Mammary epithelial cell (primary cell): ENCODE measurements at regions of chr2 and their contacts with region 1.

Region 1: GRCh38 chr2:200077210-200077650 is 121.8 kb downstream of the MAIP1 start:
- DNase-seq: peak; percentile 20
- H3K4me3 ChIP-seq: no peak overlapping the region
- H3K27ac ChIP-seq: no peak overlapping the region
- H3K4me1 ChIP-seq: no peaks in the 10 kb centered on the region
- H3K27me3 ChIP-seq: peaks cover 1% of the 10 kb centered on the region
- CTCF ChIP-seq: no peak

Region 2: DNA sequence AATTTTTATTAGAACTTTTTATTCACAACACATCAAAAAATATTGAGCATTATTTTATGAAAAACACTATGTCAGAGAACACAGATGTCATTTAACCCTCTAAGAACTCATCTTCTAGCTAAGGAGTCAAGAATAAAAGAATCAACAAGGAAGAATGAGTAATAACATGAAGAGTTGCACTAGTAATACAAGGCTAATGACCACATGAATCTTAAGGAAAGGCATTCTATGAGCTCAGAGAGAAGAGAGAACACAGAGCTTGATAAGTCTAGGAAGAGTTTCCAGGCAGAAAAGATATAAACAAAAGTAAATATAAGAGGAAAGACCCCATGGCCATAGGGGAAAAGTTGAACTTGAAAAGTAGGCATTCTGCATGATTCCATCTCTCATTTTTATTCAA is 44.7 kb after region 1 on chr2:
- CTCF ChIA-PET with region 1: no interaction called
- dilution Hi-C with region 1: loop called (anchors 5 kb)
- in situ Hi-C with region 1: no loop called
- intact Hi-C with region 1: no loop called
- DNase-seq: no peak
- H3K4me3 ChIP-seq: no peak overlapping the region
- H3K27ac ChIP-seq: no peak overlapping the region
- H3K4me1 ChIP-seq: no peaks in the 10 kb centered on the region
- H3K27me3 ChIP-seq: no peaks in the 10 kb centered on the region
- CTCF ChIP-seq: no peak

Region 3: GRCh38 chr2:200156166-200156835 is 79.1 kb after region 1 on chr2:
- CTCF ChIA-PET with region 1: no interaction called
- dilution Hi-C with region 1: loop called (anchors 5 kb)
- in situ Hi-C with region 1: no loop called
- intact Hi-C with region 1: no loop called
- DNase-seq: peak; percentile 83
- H3K4me3 ChIP-seq: peak overlapping the region in 1 of 3 experiments; percentile 23
- H3K27ac ChIP-seq: no peak overlapping the region
- H3K4me1 ChIP-seq: no peaks in the 10 kb centered on the region
- H3K27me3 ChIP-seq: no peaks in the 10 kb centered on the region
- CTCF ChIP-seq: no peak

Region 4: GRCh38 chr2:200253639-200254038 is 176.4 kb after region 1 on chr2:
- CTCF ChIA-PET with region 1: no interaction called
- dilution Hi-C with region 1: no loop called
- in situ Hi-C with region 1: no loop called
- intact Hi-C with region 1: no loop called
- DNase-seq: peak; percentile 72
- H3K4me3 ChIP-seq: no peak overlapping the region
- H3K27ac ChIP-seq: no peak overlapping the region
- H3K4me1 ChIP-seq: peaks cover under 1% of the 10 kb centered on the region
- H3K27me3 ChIP-seq: no peaks in the 10 kb centered on the region
- CTCF ChIP-seq: no peak

Region 5: DNA sequence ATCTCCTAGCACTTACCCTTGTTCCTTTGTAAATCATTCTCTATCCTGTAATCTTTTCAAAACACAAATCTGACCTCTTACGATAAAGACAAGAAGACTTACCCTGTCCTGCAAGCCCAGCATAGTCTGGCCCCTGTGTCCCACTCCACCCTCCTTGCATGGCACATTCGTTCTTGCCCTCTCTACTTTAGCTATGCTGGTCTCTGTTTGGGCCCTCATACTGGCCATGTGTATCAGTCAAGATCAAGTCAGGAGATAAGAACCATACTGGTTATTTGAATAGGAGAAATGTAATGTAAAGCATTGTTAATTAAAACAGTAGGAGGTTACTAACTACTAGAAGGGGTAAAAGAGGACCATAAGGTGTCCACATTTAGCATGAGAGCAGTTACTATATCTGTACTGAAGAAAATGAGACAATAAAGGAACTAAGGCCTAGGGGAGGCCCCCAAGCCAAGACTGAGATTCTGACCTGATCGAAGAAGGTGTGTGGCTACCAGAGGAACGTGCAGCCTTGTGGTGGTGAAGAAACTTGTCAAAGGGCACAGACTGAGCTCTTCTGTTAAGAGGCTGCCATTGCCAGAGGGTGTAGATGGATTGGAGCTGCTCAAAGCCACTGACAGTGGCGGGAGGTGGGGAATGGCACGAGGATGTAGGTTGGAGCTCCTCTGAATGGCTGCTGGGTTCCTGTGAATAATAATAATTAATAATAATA is 351.9 kb after region 1 on chr2:
- CTCF ChIA-PET with region 1: no interaction called
- dilution Hi-C with region 1: no loop called
- in situ Hi-C with region 1: no loop called
- intact Hi-C with region 1: no loop called
- DNase-seq: no peak
- H3K4me3 ChIP-seq: no peak overlapping the region
- H3K27ac ChIP-seq: no peak overlapping the region
- H3K4me1 ChIP-seq: peaks cover 7% of the 10 kb centered on the region
- H3K27me3 ChIP-seq: no peaks in the 10 kb centered on the region
- CTCF ChIP-seq: no peak